Astrocyte of the cerebellum (primary cell): ENCODE measurements at regions of chr7 and their contacts with region 1.

Region 1: GRCh38 chr7:47954231-47954911 is 6.1 kb upstream of the PKD1L1 start:
- DNase-seq: peak; percentile 92
- H3K4me3 ChIP-seq: no peak overlapping the region
- CTCF ChIP-seq: no peak

Region 2: DNA sequence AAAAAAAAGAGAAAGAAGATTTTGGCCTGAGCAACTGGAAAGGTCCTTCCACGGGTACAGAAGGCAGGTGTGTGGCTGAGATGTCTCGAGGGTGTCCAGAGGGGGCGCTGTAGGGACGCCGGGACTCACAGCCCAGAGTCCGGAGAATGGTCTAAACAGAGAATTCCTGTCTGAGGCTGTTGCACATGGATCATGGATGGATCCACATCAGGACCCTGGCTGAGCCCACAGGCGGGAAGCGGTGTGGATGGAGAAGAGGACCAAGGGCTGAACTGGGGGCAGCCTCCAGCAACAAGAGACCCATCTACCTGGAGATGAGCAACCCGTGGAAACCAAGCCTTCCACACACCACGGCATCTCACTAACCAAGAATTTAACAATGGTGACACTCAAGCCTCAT is 61.1 kb before region 1 on chr7:
- in situ Hi-C with region 1: loop called (anchors 10 kb)
- DNase-seq: no peak
- H3K4me3 ChIP-seq: no peak overlapping the region
- CTCF ChIP-seq: peak; percentile 20

Region 3: DNA sequence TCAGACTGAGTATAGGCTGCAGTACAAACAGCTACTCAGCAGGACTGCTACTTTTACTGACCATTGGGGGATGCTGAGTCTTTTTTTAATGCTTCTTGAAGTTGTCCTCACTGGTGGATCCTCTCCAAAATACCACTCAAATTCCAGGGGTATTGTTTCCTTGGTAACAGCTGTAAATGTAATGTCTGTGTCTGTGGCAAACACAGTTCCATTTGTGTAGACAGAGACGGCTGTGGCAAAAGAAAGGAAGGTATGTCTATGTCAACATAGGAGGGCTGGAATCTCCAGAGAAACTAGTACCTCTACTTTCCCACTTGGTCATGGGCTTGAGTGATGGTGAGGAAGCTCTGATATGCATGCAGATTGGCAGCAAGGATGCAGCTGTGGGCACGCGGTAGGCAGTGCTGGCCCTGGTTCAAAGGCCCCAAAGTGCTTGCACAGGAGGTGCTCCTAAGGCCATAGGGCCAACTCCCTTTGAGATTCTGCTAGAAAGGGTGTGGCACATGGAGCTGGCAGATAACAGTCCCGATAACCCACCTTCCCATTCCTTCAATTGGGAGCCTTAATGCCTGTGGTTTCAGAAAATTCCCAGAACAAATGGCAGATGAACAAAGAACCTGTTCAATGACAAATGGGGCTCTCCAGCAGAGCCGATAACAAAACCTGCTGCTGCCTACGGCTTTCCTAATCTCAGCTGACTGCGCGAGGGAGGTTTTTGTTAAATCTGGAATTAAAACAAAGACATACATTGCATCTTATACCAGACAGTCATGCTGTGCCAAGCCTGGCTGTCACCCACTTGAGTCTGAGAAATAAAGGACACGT is 49.1 kb before region 1 on chr7:
- in situ Hi-C with region 1: no loop called
- DNase-seq: peak; percentile 5
- H3K4me3 ChIP-seq: no peak overlapping the region
- CTCF ChIP-seq: no peak